ENCODE measurements at regions of chr1 and their contacts with region 1.

Region 1: DNA sequence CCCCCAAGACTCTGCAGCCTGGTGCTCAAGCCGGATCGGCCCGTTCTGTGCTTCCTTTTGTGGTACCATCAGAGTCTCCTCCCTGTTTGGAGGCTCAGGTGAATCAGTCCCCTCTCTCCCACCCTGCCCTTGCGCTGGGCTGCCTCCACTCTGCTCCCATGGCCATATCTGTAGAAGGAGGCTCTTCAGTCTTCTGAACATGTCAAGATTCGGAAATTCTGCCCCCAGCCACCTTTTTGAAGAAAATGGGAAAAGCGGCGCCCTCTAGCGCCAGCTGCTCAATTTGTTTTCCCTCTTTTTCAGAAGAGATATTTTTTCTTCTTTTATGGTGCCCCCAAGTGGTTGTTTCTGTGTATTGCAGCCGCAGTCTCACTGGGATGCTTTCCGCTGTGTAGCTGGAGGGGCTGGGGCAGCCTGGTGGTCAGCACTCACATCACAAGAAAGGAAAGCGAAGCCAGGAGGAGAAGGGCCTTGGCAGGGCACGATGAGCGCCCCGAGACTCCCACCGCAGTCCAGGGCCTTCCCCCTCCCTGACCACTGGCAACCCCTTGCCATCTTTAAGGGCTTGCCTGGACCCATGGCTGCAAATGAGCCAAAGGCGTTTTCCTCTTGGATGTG is 58.4 kb upstream of the CACNA1E start:
- DNase-seq: peak; percentile 70
- CTCF ChIP-seq: peak; percentile 95

Region 2: DNA sequence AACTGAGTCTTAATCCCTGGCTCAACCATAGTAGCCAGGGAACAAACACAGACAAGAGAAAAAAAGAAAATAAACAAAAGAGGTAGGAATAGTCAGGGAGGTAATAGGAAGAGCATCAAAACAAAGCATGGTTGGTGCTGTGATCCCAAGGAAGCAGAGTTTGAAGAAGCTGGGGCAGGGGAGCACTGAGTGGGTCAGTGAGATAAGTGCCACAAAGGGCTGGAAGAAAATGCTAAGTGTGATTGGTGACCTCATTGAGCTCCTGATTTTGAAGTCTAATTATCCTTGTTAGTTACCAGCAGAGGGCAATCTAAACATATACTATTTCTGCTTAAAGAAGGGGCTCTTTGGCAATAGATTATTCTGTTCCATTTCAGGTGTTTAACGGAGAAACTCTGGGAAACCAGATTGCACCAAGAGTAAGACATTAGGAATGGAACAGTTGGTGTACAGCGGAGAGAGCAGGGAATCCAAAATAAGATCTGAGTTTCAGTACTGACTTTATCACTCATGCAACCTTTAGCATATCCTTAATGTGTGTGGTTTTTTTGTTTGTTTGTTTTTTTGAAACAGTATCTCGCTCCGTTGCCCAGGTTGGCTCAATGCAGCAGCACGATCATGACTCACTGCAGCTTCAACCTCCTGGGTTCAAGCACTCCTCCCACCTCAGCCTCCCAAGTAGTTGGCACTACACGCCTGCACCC is 542.9 kb before region 1 on chr1:
- in situ Hi-C with region 1: loop called (anchors 25 kb)
- DNase-seq: peak; percentile 67
- CTCF ChIP-seq: peak; percentile 43

Region 3: DNA sequence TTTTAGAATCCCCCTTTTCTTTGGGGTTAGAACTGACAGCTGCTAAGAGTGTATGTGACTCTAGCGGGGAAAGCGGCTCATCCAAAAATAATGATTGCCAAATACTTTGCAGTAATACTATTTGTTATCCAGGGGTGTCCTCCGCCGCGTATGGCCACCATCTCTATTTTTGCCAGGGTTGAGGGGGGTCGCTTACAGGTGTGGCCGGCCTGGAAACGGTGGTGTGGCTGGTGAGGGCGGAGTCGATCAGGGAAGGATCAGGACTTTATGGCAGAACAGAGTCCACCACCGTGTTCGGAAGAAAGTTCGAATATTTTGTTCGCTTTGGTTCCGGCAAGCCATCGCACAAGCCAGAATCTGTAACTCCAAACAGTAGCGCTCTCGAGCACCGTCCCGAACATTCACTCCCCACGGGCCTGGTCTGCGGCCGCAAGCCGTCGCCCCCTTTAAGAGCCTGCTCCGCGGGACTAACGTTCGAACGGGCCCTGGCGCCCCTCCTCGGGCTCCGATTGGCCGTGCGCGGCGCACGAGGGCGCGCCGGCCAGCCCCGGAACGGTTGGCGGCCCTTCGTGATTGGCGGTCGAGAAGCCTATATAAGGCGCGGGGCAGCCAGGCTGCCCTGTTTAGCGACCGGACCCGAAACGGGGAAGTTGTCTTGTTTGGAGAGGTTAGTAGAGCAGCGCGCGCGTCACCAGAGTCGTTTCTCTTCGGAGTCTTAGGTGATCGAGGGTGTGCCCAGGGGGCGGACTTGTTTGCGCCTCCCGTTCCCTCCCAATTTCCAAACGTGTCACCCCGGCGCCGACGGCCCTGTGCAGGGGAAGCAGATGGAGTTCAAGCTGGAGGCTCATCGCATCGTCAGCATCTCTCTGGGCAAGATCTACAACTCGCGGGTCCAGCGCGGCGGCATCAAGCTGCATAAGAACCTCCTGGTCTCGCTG is 336.5 kb before region 1 on chr1 and contains the start of gene IER5:
- in situ Hi-C with region 1: no loop called
- DNase-seq: peak; percentile 94
- CTCF ChIP-seq: no peak

Region 4: DNA sequence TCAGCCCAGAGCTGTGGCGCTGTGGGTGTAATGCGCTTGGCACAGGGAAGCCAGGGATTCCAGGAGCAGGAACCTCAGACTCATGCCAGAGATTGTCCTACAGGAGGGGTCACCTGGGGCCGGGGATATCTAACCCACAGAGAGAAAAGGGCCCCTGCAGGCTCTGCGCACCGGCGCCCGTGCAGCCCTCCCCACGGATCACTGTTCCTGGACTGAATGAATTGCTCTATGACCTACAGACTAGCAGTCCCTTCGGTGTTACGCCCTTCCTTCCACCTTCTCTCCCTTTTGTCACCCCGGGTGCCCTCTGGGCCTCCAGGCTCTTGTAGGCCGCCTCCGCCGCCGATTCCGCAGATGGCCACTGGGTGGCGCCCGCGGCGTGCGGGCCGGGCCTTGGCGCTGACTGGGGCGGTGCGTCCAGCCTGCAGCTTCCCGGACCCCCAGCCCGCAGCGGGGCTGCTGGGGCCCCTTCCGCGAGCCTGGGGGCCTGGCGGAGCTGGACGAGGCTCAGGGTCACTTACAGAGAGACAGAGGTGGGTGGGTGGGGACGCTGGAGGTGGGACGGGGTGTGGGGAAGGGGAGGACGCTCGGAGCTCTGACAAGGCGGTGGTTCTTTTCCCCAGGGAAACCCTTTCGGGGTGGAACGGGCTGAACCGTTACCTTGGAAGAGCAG is 235.1 kb before region 1 on chr1:
- in situ Hi-C with region 1: loop called (anchors 5 kb)
- DNase-seq: peak; percentile 93
- CTCF ChIP-seq: peak; percentile 99

Region 5: GRCh38 chr1:181232532-181232931 is 192.4 kb before region 1 on chr1:
- in situ Hi-C with region 1: no loop called
- DNase-seq: no peak
- CTCF ChIP-seq: no peak

Region 6: DNA sequence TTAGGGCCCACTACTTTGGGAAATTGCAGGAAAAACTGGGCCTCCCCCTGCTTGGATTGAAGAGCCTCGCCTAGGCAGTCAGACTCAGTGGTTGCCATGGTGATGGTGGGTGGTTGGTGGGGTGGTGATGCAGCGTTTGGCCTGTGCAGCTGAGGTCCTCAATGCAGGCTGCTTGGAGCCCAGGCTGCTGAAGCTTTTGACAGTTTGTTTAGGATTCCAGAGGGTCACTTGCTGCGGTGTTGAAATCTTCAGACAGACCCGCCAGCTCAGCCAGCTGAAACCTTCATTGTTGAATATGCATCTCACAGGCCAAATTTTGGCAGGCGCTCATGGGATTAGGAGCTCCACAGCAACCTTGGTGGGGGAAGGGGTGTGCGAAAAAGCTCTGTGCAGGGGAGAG is 126.4 kb after region 1 on chr1:
- in situ Hi-C with region 1: no loop called
- DNase-seq: no peak
- CTCF ChIP-seq: no peak

Measured in GM13976 (cell line).